Mammary epithelial cell (primary cell): ENCODE measurements at regions of chr11 and their contacts with region 1.

Region 1: DNA sequence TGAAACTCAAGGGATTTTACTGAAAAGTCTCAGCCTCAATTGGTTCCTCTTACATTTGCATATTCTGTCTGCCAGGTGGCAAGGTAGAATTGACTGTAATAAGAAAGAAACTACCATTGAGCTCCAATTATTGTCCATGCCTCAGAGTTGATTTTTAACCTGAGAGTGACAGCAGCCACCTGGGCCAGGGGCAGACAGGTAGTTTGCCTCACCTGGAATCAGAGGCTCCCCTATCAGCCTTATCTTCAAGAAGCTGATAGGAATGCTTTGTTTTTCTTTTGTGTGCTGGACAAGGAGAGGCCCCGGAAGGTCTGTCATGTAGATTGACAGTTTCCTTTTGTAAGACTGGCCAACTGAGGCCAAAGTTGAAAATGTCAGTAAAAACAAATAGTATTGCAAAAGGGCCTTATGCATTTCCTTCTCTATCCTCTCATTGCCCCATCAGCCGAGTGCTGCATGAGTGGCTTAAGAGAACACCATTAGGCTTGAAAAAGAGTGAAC is 34.1 kb downstream of the CD44 start:
- DNase-seq: no peak
- H3K4me3 ChIP-seq: no peak overlapping the region
- H3K27ac ChIP-seq: no peak overlapping the region
- H3K4me1 ChIP-seq: peaks cover 51% of the 10 kb centered on the region
- H3K27me3 ChIP-seq: no peaks in the 10 kb centered on the region
- CTCF ChIP-seq: no peak

Region 2: GRCh38 chr11:35232891-35233330 is 59.9 kb after region 1 on chr11:
- CTCF ChIA-PET with region 1: no interaction called
- dilution Hi-C with region 1: loop called (anchors 5 kb)
- in situ Hi-C with region 1: no loop called
- intact Hi-C with region 1: no loop called
- DNase-seq: no peak
- H3K4me3 ChIP-seq: no peak overlapping the region
- H3K27ac ChIP-seq: no peak overlapping the region
- H3K4me1 ChIP-seq: peaks cover 19% of the 10 kb centered on the region
- H3K27me3 ChIP-seq: no peaks in the 10 kb centered on the region
- CTCF ChIP-seq: no peak